ENCODE measurements at regions of chr17 and their contacts with region 1.

Region 1: GRCh38 chr17:10844621-10845387 is 6.9 kb upstream of the PIRT start:
- DNase-seq: peak; percentile 44 to 82
- H3K4me3 ChIP-seq: peak overlapping the region; percentile 31
- H3K4me1 ChIP-seq: no peaks in the 10 kb centered on the region
- H3K27me3 ChIP-seq: no peaks in the 10 kb centered on the region

Region 2: GRCh38 chr17:9512323-9513168 is 1332.3 kb before region 1 on chr17:
- in situ Hi-C with region 1: no loop called
- DNase-seq: no peak
- H3K4me3 ChIP-seq: no peak overlapping the region
- H3K4me1 ChIP-seq: 0 out of 2 replicates have a peak, but pooled peaks cover 4% of the 10 kb centered on the region
- H3K27me3 ChIP-seq: no peaks in the 10 kb centered on the region

Region 3: GRCh38 chr17:10646392-10646990 is 198.3 kb before region 1 on chr17:
- in situ Hi-C with region 1: loop called (anchors 5 kb)
- DNase-seq: peak; percentile 59 to 87
- H3K4me3 ChIP-seq: no peak overlapping the region
- H3K4me1 ChIP-seq: no peaks in the 10 kb centered on the region
- H3K27me3 ChIP-seq: no peaks in the 10 kb centered on the region

Region 4: GRCh38 chr17:10729334-10730193 is 115.2 kb before region 1 on chr17 and contains the start of gene TMEM220:
- in situ Hi-C with region 1: loop called (anchors 10 kb)
- DNase-seq: peak; percentile 73 to 86
- H3K4me3 ChIP-seq: peak within 1 kb of the TSS; percentile 57
- H3K4me1 ChIP-seq: peaks cover 6% of the 10 kb centered on the region
- H3K27me3 ChIP-seq: no peaks in the 10 kb centered on the region

Region 5: DNA sequence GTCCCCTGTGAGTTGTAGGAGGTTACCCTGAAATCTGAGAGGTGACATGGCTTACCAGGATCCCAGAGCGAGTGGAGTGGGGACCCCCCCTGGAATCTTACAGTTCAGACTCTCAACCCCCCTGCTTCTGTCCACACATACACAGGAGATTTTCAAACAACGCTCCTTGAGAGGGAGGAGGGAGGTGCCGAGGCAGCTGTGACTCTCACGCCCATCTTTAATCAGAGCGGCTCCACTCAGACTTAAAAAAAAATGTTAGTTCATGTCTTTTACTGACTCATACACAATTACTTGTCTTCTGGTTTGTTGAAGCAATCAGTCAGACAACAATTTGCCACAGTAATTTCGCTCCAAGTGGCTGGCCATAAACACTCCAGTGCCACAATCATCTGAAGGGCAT is 99.6 kb before region 1 on chr17:
- in situ Hi-C with region 1: no loop called
- DNase-seq: no peak
- H3K4me3 ChIP-seq: no peak overlapping the region
- H3K4me1 ChIP-seq: no peaks in the 10 kb centered on the region
- H3K27me3 ChIP-seq: no peaks in the 10 kb centered on the region